BJ (cell line): ENCODE measurements at regions of chr5 and their contacts with region 1.

Region 1: GRCh38 chr5:138223532-138223931 is 10.4 kb upstream of the CDC23 start:
- DNase-seq: no peak
- H3K4me3 ChIP-seq: no peak overlapping the region
- H3K27me3 ChIP-seq: no peaks in the 10 kb centered on the region
- CTCF ChIP-seq: no peak

Region 2: DNA sequence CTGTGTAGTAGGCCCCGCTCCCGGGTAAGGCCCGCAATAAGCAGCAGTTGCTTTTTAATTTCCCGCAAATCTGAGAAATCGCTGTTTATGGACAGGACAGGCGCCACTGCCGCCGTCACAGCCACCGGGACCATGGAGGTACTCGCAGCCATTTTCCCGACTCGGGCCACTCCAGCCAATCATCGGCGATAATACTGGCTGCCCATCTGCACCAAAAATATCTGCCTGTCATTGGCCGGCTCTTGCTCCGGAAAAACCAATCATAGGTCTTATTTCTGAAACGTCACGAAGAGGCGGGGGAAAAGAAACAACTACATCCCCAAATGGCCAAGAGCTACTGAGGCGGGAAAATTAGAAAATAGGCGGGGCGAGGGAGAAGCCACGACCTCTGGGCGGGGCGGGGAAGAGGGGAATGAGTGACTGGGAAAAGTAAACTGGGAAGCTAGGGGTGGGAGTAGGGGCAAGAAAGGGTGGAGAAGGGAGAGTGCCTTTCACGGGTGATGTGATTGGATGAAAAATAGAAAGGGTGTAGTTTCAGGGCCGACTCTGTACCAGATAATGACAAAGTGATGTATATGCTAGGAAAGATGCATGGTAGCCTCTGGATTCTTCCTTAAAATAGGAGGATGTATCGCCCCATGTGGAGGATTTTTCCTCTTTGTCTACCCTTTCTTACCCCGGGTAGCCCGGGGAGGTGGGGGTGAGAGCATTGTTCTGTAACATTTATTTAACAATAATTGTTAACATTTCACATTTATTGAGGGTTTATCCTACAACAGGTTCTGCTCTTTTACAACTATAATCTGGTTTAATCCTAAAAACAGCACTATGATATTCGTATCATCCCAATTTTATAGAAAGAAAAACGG is 10.1 kb before region 1 on chr5 and contains the start of gene CDC23:
- CTCF ChIA-PET with region 1: interaction called, 15 read pairs
- POLR2A ChIA-PET with region 1: no interaction called
- DNase-seq: peak; percentile 97
- H3K4me3 ChIP-seq: peak within 1 kb of the TSS; percentile 96
- H3K27me3 ChIP-seq: no peaks in the 10 kb centered on the region
- CTCF ChIP-seq: no peak
- polyA plus RNA-seq, gene CDC23: 20.9 and 38.3 TPM in 2 replicates

Region 3: DNA sequence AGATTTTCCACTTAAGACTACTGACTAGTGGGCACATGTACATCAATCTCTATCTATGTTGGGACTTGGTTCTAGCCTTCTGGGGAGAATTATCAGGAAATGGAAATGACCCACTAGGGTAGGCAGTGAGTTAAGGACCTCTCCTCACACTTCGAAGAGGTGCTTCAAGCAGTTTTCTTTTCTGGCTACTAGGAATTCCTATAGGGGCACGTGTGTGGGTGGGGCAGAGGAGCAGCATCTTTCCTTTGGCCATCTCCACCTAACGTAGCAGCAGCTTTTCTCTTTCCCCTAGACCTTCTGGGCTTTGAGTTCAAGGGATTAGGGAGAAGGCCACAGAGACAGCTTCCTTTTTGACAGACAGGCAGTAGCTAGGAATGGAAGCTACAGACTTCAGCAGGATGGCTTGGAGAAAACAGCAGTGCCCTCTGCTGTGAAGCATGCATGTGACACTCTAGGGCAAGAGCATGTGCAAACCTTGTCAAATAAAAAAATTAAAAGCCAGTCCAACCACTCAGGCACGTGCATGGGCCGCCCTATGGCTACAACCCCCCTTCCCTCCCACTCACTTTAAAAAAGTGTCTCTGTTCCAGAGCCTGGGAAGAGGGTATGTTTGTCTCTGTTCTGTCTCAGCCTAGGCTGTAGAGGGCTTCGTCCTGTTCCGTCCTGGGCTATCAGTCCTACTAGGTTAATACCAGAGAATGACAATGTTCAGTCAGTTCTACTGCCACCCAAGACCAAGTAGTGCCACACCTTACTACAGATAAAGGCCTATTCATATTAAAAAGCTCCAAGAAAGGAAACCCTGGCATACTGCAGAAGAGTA is 59.6 kb after region 1 on chr5:
- CTCF ChIA-PET with region 1: interaction called, 28 read pairs
- POLR2A ChIA-PET with region 1: no interaction called
- DNase-seq: peak; percentile 4
- H3K4me3 ChIP-seq: no peak overlapping the region
- H3K27me3 ChIP-seq: no peaks in the 10 kb centered on the region
- CTCF ChIP-seq: peak; percentile 66

Region 4: DNA sequence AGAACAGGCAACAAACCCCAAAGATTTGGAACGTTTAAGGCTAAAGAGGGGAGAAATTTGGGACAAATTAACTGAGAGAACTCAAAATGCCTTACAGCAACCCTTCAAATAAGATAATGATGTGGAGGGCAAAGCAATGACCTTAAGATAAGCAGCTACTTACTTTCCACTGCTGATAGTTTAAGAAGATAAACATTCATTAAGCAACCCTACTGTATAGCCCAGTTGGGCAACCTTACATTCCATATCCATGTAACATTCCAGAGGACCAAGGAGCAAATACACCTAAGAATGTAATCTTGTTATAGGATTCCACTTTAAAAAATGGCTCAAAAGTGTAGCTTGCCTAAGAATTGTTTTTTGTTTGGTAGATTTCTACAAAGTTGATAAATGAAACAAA is 304.7 kb after region 1 on chr5:
- CTCF ChIA-PET with region 1: no interaction called
- POLR2A ChIA-PET with region 1: no interaction called
- DNase-seq: no peak
- H3K4me3 ChIP-seq: no peak overlapping the region
- H3K27me3 ChIP-seq: no peaks in the 10 kb centered on the region
- CTCF ChIP-seq: no peak